ENCODE measurements at regions of chr9 and their contacts with region 1.

Region 1: GRCh38 chr9:99253772-99254431 is 31.8 kb downstream of the SEC61B start:
- DNase-seq: peak; percentile 73
- ATAC-seq: peak; percentile 87
- H3K4me3 Mint-ChIP-seq: peak overlapping the region; percentile 59
- H3K27ac Mint-ChIP-seq: peak overlapping the region; percentile 94
- H3K4me1 Mint-ChIP-seq: peaks cover 49% of the 10 kb centered on the region
- H3K27me3 Mint-ChIP-seq: no peaks in the 10 kb centered on the region
- CTCF ChIP-seq: no peak

Region 2: GRCh38 chr9:99239341-99240060 is 14.4 kb before region 1 on chr9:
- CTCF ChIA-PET with region 1: interaction called, 3 read pairs
- POLR2A ChIA-PET with region 1: interaction called, 27 read pairs
- intact Hi-C with region 1: loop called (anchors 1 kb)
- DNase-seq: no peak
- ATAC-seq: no peak
- H3K4me3 Mint-ChIP-seq: no peak overlapping the region
- H3K27ac Mint-ChIP-seq: peak overlapping the region; percentile 59
- H3K4me1 Mint-ChIP-seq: peaks cover 70% of the 10 kb centered on the region
- H3K27me3 Mint-ChIP-seq: no peaks in the 10 kb centered on the region
- CTCF ChIP-seq: no peak

Region 3: GRCh38 chr9:99634186-99634585 is 380.3 kb after region 1 on chr9:
- CTCF ChIA-PET with region 1: no interaction called
- POLR2A ChIA-PET with region 1: no interaction called
- intact Hi-C with region 1: no loop called
- DNase-seq: no peak
- ATAC-seq: peak; percentile 65
- H3K4me3 Mint-ChIP-seq: peak overlapping the region; percentile 7
- H3K27ac Mint-ChIP-seq: peak overlapping the region; percentile 90
- H3K4me1 Mint-ChIP-seq: peaks cover 29% of the 10 kb centered on the region
- H3K27me3 Mint-ChIP-seq: no peaks in the 10 kb centered on the region
- CTCF ChIP-seq: no peak